Activated T-helper 2 cell treated with anti-CD3 and anti-CD28 coated beads, Interferon-gamma antibody, Interleukin-2, Interleukin-4, amounts not matched to agents 10 μg/mL and 5 μg/mL and 100 μg/mL, durations not matched to agents 14 hours and 24 hours and 36 hours (primary cell): ENCODE measurements at regions of chrX and their contacts with region 1.

Region 1: DNA sequence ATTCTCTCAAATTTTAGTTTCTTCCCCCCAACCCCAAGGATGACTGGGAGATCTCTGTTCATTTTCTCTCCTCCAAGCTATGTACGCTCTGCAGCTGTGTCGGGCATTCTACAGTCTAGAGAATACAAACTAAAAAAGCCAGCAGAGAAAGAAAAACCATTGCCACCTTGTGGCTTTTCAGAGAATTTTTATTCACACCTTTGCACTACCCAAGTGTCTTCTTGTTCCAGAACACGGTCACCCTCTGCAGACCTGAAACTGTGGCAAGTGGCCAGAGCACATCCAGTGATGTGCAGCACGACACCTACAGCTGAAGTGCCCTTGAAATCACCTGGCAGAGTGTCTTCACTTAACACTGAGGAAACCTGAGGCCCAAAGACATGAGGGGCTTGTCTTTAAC is 68.6 kb downstream of the CHST7 start:
- DNase-seq: no peak
- H3K4me3 Mint-ChIP-seq: no peak overlapping the region
- H3K27ac Mint-ChIP-seq: peak overlapping the region; percentile 8
- H3K4me1 Mint-ChIP-seq: peaks cover 19% of the 10 kb centered on the region
- H3K27me3 Mint-ChIP-seq: no peaks in the 10 kb centered on the region

Region 2: DNA sequence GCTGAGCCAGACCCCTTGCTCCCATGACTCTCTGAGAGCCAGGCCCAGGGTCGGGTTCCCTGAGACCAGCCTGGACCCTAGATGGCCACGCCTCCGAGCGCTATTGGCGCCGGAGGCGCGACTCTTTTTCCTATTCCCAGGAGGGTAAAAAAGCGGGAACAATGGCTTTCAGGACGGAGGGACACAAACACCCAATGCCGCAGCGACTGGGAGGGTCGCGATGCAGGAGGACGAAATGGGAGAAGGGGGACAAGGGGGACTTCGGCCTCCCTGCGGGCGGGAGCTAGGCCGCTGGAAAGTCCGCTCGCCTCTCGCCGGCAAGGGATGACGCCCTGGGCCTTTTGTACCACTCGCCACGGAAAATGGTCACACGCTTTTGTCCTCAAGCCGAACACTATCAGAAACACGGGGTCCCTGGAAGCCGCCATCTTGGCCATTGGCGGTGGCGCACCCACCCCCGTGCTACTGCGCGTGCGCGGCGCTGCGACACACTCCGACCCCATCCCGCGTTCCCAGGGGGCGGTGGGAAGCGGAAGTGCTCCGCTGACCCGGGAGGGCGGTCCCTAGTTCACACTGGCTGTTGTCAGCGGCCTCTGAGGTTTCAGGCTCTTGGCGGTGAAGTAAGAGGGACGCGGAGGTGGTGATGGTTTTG is 195.3 kb before region 1 on chrX:
- intact Hi-C with region 1: loop called (anchors 10 kb)
- DNase-seq: peak; percentile 77
- H3K4me3 Mint-ChIP-seq: peak overlapping the region; percentile 84
- H3K27ac Mint-ChIP-seq: peak overlapping the region; percentile 90
- H3K4me1 Mint-ChIP-seq: peaks cover 19% of the 10 kb centered on the region
- H3K27me3 Mint-ChIP-seq: no peaks in the 10 kb centered on the region

Region 3: GRCh38 chrX:46573331-46573891 is 68.7 kb before region 1 on chrX and contains the start of gene CHST7:
- intact Hi-C with region 1: loop called (anchors 1 kb)
- DNase-seq: peak; percentile 38
- H3K4me3 Mint-ChIP-seq: peak within 1 kb of the TSS; percentile 78
- H3K27ac Mint-ChIP-seq: peak within 1 kb of the TSS; percentile 42
- H3K4me1 Mint-ChIP-seq: peaks cover 32% of the 10 kb centered on the region
- H3K27me3 Mint-ChIP-seq: no peaks in the 10 kb centered on the region
- total RNA-seq, gene CHST7: 3.8 TPM in 2 replicates